Gastrocnemius medialis (tissue), 4 donors: ENCODE measurements at regions of chr11 and their contacts with region 1.

Region 1: GRCh38 chr11:73404048-73404447 is 27.8 kb downstream of the RELT start:
- DNase-seq: peak in 1 of 2 donors; percentile 73
- ATAC-seq: peak; percentile 59 to 63
- H3K4me3 ChIP-seq: no peak overlapping the region
- H3K27ac ChIP-seq: peak overlapping the region; percentile 3 to 43 (median 14)
- H3K4me1 ChIP-seq: peaks cover 4 to 9% of the 10 kb centered on the region in 2 donors
- H3K27me3 ChIP-seq: no peaks in the 10 kb centered on the region
- CTCF ChIP-seq: peak; percentile 50 to 74 (median 59)
- POLR2A ChIP-seq: no peak

Region 2: GRCh38 chr11:73652046-73652730 is 248.1 kb after region 1 on chr11:
- in situ Hi-C with region 1: loop called in 3 of 4 experiments (anchors 10 kb)
- intact Hi-C with region 1: no loop called
- DNase-seq: no peak
- ATAC-seq: no peak
- H3K4me3 ChIP-seq: no peak overlapping the region
- H3K27ac ChIP-seq: no peak overlapping the region
- H3K4me1 ChIP-seq: peaks cover 0 to 3% of the 10 kb centered on the region in 2 donors
- H3K27me3 ChIP-seq: no peaks in the 10 kb centered on the region
- CTCF ChIP-seq: no peak
- POLR2A ChIP-seq: no peak